Colonic mucosa (tissue), 4 donors: ENCODE measurements at regions of chr12 and their contacts with region 1.

Region 1: GRCh38 chr12:56117778-56118687 is at the start of gene ZC3H10:
- DNase-seq: peak; percentile 99
- H3K4me3 ChIP-seq: peak within 1 kb of the TSS; percentile 49
- H3K27ac ChIP-seq: peak within 1 kb of the TSS; percentile 95
- H3K4me1 ChIP-seq: peaks cover 8% of the 10 kb centered on the region
- H3K27me3 ChIP-seq: no peaks in the 10 kb centered on the region
- CTCF ChIP-seq: no peak
- total RNA-seq, gene ZC3H10: 3.5 to 6.1 TPM

Region 2: GRCh38 chr12:56007564-56008559 is 110.2 kb before region 1 on chr12:
- intact Hi-C with region 1: no loop called
- DNase-seq: peak; percentile 80
- H3K4me3 ChIP-seq: peak overlapping the region; percentile 69
- H3K27ac ChIP-seq: peak overlapping the region; percentile 87
- H3K4me1 ChIP-seq: peaks cover 2% of the 10 kb centered on the region
- H3K27me3 ChIP-seq: no peaks in the 10 kb centered on the region
- CTCF ChIP-seq: no peak

Region 3: DNA sequence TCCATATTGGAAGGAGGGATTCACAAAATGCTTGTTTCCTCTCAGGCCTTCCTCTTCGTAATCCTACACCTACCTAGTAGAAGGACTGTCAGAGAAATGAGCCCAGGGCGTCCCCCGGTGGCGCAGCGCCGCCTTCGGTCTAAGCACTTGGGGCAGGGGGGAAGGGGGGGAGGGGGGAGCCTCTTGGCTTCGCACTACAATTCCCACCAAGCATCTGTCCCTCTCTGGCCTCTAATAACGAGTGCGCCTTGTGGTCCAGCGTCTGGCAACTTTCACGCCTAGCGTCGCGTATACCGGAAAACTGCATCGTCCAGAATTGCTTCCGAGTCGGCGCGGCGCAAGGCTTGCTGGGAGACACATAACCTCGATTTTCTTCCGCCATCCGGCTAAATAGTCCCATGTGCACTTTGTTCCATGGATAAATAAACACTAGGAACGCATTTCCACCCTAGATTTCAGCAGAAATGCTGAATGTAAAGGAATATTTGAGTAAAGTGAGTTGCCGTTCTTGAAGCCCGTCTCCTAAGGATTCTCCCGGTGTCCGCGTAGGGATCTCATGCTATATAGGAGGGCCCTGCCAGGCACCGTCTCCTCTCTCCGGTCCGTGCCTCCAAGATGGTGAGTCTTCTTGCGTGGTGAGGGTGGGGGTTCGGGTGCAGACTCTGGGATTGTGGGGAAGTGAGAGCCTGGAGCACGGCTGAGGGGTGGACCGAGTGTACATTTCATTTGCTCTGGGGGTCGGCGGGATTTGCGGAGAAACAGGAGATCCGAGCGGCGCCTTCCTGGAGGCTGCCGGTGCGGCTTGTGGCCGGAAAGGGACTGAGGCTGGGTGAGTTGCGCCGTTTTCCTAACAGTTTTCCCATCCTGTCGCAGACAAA is 76.2 kb before region 1 on chr12 and contains the start of gene RPS26:
- intact Hi-C with region 1: loop called (anchors 10 kb)
- DNase-seq: peak; percentile 95
- H3K4me3 ChIP-seq: peak within 1 kb of the TSS; percentile 67
- H3K27ac ChIP-seq: peak within 1 kb of the TSS; percentile 96
- H3K4me1 ChIP-seq: peaks cover 5% of the 10 kb centered on the region
- H3K27me3 ChIP-seq: no peaks in the 10 kb centered on the region
- CTCF ChIP-seq: peak; percentile 30
- total RNA-seq, gene RPS26: 53.1 to 80.5 TPM

Region 4: DNA sequence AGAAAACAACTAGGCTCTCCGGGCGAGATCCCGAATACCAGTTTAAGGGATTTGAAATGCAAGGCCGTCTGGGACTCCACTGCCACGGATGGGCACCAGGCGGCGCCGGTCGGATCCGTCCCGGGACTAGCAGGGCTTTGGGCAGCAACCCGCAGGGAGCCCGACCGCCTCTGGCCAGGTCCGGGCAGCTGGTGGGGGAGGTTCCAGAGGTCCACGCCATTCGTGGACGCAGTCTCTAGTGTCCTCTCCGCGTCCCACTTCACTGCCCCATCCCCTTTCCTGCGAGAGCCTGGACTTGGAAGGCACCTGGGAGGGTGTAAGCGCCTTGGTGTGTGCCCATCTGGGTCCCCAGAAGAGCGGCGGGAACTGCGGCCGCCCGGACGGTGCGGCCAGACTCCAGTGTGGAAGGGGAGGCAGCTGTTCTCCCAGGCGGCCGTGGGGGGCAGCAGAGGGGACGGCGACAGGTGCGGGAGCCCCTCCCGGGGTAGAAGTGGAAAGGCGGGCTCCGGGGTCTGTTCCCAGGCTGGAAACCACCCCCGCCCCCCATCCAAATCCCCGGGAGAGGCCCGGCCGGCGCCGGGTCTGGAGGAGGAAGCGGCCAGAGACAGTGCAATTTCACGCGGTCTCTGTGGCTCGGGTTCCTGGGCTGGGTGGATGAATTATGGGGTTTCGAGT is 38.9 kb before region 1 on chr12:
- intact Hi-C with region 1: loop called (anchors 2 kb)
- DNase-seq: peak; percentile 95
- H3K4me3 ChIP-seq: peak overlapping the region; percentile 61
- H3K27ac ChIP-seq: peak overlapping the region; percentile 96
- H3K4me1 ChIP-seq: no peaks in the 10 kb centered on the region
- H3K27me3 ChIP-seq: no peaks in the 10 kb centered on the region
- CTCF ChIP-seq: peak; percentile 79